Natural killer cell (primary cell): ENCODE measurements at regions of chr21 and their contacts with region 1.

Region 1: DNA sequence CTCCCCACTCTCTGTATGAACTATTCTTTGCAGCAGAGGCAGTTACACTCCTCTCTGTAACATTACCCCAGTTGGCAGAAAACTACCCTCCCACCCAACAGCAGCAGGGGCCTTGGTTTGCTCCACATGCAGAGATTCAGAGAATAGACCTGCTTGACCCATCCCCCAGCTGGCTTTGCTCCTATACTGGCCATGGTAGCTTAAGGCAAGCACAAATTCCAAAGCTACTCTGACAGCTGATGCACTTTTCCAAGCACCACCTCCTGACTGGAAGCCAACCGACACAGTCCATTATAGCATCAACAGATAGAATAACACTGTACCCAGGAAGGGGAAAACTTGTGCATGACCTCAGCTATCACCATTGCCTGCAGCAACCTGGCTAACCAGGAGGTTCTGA is 846.5 kb upstream of the NCAM2 start:
- DNase-seq: no peak
- ATAC-seq: no peak
- H3K4me3 ChIP-seq: no peak overlapping the region
- H3K4me3 Mint-ChIP-seq: no peak overlapping the region
- H3K27ac ChIP-seq: no peak overlapping the region
- H3K27ac Mint-ChIP-seq: no peak overlapping the region
- H3K4me1 ChIP-seq: no peaks in the 10 kb centered on the region
- H3K4me1 Mint-ChIP-seq: no peaks in the 10 kb centered on the region
- H3K27me3 ChIP-seq: no peaks in the 10 kb centered on the region
- H3K27me3 Mint-ChIP-seq: no peaks in the 10 kb centered on the region
- CTCF ChIP-seq: no peak

Region 2: DNA sequence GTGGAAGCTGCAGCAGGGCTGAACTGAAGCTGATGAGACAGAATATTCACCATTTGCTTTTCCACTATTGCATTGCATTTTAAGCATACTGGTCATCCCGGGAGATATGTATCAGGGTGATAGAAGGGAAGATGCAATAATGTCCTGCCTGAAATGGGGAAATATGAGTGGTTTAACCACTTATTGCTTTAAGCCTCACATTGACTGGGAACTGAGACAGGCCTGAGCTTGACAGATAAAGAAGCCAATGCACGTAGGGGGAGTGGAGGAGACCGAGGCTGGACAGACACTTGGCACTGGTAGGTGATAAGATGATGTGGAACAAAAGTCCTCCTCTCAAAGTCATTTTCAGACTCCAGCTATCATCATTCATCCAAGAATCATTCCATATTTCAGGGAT is 65.2 kb before region 1 on chr21:
- intact Hi-C with region 1: loop called (anchors 10 kb)
- DNase-seq: no peak
- ATAC-seq: no peak
- H3K4me3 ChIP-seq: no peak overlapping the region
- H3K4me3 Mint-ChIP-seq: no peak overlapping the region
- H3K27ac ChIP-seq: no peak overlapping the region
- H3K27ac Mint-ChIP-seq: no peak overlapping the region
- H3K4me1 ChIP-seq: no peaks in the 10 kb centered on the region
- H3K4me1 Mint-ChIP-seq: no peaks in the 10 kb centered on the region
- H3K27me3 ChIP-seq: no peaks in the 10 kb centered on the region
- H3K27me3 Mint-ChIP-seq: no peaks in the 10 kb centered on the region
- CTCF ChIP-seq: no peak